Endothelial cell of umbilical vein (primary cell): ENCODE measurements at regions of chr10 and their contacts with region 1.

Region 1: GRCh38 chr10:57535306-57535705 is 732.4 kb downstream of the IPMK start:
- DNase-seq: no peak
- H3K4me3 ChIP-seq: no peak overlapping the region
- H3K27ac ChIP-seq: no peak overlapping the region
- H3K4me1 ChIP-seq: no peaks in the 10 kb centered on the region
- H3K27me3 ChIP-seq: no peaks in the 10 kb centered on the region
- CTCF ChIP-seq: no peak
- POLR2A ChIP-seq: no peak

Region 2: DNA sequence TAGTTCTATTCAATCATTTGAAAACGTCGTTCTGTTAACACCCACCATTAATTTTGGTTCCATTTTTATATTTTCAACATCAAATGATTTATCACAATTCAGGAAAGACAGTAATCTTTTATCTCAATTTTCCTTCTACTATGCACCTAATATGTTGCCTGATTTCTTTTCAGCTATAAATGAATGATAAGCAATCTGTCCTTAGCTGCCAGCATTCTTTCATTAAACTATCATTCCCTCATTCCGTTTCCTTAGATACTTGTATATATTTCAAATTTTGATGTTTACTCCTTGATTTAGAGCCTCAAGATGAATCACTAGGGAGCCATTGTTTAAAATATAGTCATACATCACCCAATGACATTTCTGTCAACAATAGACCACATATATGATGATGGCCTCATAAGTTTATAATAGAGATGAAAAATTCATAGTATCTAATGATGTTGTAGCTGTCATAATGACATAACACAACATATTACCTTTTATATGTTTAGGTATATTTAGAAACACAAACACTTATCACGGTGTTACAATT is 70.7 kb after region 1 on chr10:
- CTCF ChIA-PET with region 1: no interaction called
- POLR2A ChIA-PET with region 1: no interaction called
- dilution Hi-C with region 1: no loop called
- intact Hi-C with region 1: loop called (anchors 10 kb)
- DNase-seq: no peak
- H3K4me3 ChIP-seq: no peak overlapping the region
- H3K27ac ChIP-seq: no peak overlapping the region
- H3K4me1 ChIP-seq: no peaks in the 10 kb centered on the region
- H3K27me3 ChIP-seq: no peaks in the 10 kb centered on the region
- CTCF ChIP-seq: no peak
- POLR2A ChIP-seq: no peak